ENCODE measurements at regions of chr1 and their contacts with region 1.

Region 1: DNA sequence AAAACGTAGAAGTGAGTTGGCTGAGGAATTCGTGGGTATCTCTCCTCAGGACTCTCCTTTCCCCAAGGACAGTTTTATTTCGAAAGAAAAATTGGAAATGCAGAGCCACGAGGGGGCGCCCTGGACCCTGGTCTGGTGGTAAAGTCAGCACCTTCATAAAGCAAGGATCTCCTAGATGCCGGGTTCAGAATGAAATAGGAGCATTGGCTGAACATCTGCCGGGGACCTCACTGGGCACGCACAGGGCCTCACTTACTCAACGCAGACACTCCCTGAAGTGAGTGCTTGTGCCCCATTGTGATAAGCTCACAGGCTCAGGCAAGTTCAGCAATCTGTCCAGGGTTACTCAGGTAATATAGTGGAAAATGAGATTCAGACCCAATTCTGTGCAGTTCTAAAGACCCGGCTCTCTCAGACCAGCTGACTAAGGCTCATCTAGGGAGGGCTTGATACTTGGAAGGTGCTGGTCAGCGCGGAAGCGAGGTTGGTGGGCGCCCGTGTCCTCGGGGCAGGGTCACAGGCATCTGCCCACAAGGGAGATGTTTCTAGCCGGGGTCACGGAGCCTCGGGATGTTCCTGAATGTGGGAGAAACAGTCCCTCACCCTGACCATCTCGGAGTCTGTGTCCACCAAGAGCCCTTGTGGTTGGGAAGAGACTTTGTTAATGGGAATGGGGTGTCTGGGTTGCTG is 55.7 kb upstream of the ETV3 start:
- DNase-seq: no peak

Region 2: GRCh38 chr1:156876281-156876680 is 317.6 kb before region 1 on chr1:
- intact Hi-C with region 1: no loop called
- DNase-seq: no peak

Region 3: GRCh38 chr1:157487096-157487495 is 293.2 kb after region 1 on chr1:
- intact Hi-C with region 1: loop called (anchors 2 kb)
- DNase-seq: no peak

Region 4: GRCh38 chr1:157495285-157495684 is 301.4 kb after region 1 on chr1:
- intact Hi-C with region 1: loop called (anchors 2 kb)
- DNase-seq: no peak

Region 5: GRCh38 chr1:157505481-157506272 is 311.8 kb after region 1 on chr1:
- intact Hi-C with region 1: no loop called
- DNase-seq: no peak